Heart right ventricle (tissue), 16 donors: ENCODE measurements at regions of chr19 and their contacts with region 1.

Region 1: DNA sequence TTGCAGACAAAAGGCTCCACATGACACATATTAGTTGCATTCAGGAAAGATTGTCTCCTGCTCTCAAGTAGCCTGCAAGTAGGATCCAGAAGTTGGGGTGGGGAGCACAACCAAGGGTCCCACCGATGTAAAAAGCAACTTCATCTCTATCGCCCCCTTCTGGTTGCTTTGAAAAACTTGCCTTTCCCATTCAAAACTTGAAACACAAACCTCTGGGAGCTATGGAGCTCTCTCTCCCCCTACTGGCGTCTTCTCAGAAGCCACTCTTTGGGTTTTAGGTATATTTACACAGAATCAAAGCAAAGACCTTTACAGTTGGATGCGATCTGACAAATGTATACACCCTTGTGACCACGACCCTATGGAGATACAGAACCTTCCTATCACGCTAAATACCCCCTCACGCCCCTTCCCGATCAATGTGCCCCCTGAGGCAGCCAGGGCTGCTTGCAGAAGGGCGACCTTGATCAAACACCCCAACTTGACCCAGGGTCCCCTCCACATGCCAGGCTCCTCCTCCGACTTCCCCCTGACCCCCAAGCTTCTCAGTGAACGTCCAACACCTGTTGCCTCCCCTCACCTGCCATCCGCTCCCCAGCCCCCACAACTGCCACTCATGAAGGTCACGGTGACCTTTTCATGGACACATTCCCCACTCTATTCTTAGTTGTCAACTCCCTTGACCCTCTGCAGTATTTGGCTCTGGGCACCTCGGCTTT is 10.1 kb downstream of the NOSIP start:
- DNase-seq: peak in 1 of 2 donors; percentile 74
- ATAC-seq: peak; percentile 58 to 84 (median 73)
- H3K4me3 ChIP-seq: no peak overlapping the region
- H3K27ac ChIP-seq: peak overlapping the region in 9 of 10 donors; percentile 19 to 83 (median 79)
- H3K4me1 ChIP-seq: peaks cover 8 to 48% (median 31%) of the 10 kb centered on the region in 9 donors
- H3K27me3 ChIP-seq: no peaks in the 10 kb centered on the region
- CTCF ChIP-seq: peak; percentile 95 to 99 (median 98)

Region 2: GRCh38 chr19:49497047-49497788 is 73.1 kb before region 1 on chr19:
- intact Hi-C with region 1: loop called in 5 of 10 experiments (anchors 2 to 5 kb)
- DNase-seq: peak; percentile 32 to 56
- ATAC-seq: no peak
- H3K4me3 ChIP-seq: peak overlapping the region; percentile 63 to 97 (median 82)
- H3K27ac ChIP-seq: peak overlapping the region; percentile 87 to 99 (median 92)
- H3K4me1 ChIP-seq: peaks cover 11 to 61% (median 49%) of the 10 kb centered on the region in 9 donors
- H3K27me3 ChIP-seq: no peaks in the 10 kb centered on the region
- CTCF ChIP-seq: no peak

Region 3: DNA sequence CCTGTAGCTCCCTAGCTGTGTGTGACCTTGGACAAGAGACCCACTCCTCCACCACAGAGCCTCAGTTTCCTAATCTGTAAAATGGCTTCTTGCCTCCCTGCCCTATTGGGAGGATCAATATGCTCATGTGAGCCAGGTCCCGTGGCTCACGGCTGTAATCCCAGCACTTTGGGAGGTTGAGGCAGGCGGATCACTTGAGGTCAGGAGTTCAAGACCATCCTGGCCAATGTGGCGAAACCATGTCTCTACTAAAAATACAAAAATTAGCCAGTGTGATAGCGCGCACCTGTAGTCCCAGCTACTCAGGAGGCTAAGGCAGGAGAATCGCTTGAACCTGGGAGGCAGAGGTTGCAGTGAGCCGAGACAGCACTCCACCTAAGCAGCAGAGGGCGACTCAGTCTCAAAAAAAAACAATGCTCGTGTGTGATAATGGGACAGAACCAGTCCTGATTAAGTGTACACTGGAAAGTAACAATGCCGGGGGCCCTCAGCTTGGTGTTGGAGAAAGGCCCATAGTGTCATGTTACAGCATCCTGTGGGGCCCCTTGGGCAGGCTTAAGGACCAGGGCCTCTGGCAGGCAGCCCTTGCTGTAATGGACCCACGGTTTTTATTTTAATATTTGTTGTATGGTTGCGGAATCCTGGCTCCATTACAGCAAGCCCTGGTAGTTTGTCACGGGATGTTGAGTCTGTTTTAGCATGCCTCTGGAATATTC is 67.3 kb before region 1 on chr19:
- intact Hi-C with region 1: loop called in 5 of 10 experiments (anchors 2 to 5 kb)
- DNase-seq: peak in 1 of 2 donors; percentile 59
- ATAC-seq: peak; percentile 16 to 64 (median 54)
- H3K4me3 ChIP-seq: no peak overlapping the region
- H3K27ac ChIP-seq: peak overlapping the region in 3 of 10 donors; percentile 17 to 46 (median 25)
- H3K4me1 ChIP-seq: peaks cover 6 to 54% (median 35%) of the 10 kb centered on the region in 9 donors
- H3K27me3 ChIP-seq: no peaks in the 10 kb centered on the region
- CTCF ChIP-seq: peak; percentile 34 to 78 (median 67)

Region 4: DNA sequence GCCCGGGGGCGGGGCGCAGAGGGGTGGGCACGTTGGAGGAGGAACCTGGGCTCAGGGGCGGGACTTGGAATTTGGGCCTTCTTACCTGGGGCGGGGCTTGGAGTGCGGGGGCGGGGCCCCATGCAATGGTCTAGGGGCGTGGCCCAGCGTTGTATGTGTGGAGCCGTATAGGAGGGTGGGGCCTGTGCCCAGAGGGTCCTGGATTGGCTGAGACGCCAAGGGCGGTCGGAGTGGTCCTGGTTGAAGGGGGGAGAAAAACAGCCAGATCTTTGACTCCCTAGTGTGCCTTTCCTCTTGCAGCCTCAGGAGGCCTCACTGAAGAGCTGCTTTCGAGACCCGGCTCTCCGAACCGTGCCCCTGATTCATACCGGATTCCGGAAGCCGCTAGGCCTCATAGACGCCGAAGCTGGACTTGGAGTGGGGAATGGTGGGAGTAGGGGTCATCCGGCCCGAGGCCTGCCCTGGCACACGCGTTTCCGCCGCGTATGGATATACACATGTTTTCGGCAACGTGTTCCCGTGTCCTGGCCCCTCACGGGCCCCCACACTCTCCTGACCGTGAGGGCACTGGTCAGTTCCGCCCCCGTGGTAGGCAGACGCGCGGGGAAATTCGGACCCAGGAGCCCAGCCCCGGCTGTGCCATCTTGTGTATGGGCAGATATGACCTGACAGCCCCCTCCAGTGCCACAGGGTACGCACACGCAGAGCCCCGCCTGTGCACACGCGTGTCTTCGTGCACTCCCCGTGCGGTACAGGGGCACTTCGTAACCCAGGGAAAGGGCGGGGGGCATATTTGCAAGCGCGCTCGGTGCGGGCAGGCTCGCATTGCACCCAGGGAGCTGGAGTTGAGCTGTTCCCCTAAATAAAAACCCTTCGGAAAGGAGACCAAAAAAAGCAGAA is 20.0 kb after region 1 on chr19:
- intact Hi-C with region 1: no loop called
- DNase-seq: peak; percentile 94 to 95
- ATAC-seq: peak; percentile 79 to 91 (median 88)
- H3K4me3 ChIP-seq: peak overlapping the region; percentile 65 to 89 (median 81)
- H3K27ac ChIP-seq: peak overlapping the region; percentile 76 to 98 (median 92)
- H3K4me1 ChIP-seq: peaks cover 6 to 37% (median 22%) of the 10 kb centered on the region in 9 donors
- H3K27me3 ChIP-seq: no peaks in the 10 kb centered on the region
- CTCF ChIP-seq: peak in 3 of 9 donors; percentile 10 to 25 (median 25)

Region 5: DNA sequence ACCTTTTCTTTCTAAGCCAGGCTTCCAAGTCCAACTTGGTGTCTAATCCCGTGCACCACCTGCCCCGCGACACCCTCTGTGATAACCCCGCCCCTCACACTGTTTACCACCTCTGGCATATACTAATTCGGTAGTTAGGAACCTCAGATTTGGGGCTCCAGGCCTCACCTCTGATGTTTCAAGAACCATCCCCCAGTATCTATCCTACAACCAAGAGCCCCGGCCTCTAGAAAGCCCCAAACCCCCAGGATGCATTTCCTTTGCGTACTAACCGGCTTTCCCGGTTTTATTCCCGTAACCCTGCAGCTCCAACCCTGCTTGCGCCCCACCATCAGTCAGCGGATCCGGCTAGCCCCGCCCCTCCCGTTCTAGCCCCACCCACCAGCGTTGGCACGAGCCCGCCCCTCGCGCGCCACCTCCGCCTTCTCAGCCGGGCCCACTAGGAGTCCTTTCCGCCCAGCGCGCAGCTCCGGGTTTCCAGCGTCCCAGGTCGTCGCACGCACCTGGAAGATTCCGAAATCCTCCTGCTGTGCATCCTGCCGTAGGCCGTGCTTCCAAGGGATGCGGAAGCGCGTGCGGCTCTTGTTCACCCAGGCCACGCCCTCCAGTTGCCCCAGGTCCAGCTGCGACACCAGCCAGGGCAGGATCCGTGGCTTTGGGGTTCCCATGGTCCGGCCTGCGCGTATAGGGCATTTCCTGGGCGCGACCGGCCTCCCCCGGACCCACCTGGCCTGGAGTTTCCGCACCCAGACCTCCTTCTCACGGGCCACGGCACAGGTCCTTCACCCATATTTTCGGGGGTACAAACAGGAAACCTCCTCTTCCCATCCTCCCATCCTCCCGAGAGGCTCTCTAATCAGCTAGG is 94.1 kb after region 1 on chr19:
- intact Hi-C with region 1: no loop called
- DNase-seq: peak; percentile 88 to 91
- ATAC-seq: peak; percentile 78 to 88 (median 84)
- H3K4me3 ChIP-seq: peak overlapping the region; percentile 50 to 94 (median 78)
- H3K27ac ChIP-seq: peak overlapping the region; percentile 11 to 92 (median 89)
- H3K4me1 ChIP-seq: peaks cover 10 to 31% (median 19%) of the 10 kb centered on the region in 9 donors
- H3K27me3 ChIP-seq: no peaks in the 10 kb centered on the region
- CTCF ChIP-seq: peak in 4 of 9 donors; percentile 19 to 37 (median 34)

Region 6: DNA sequence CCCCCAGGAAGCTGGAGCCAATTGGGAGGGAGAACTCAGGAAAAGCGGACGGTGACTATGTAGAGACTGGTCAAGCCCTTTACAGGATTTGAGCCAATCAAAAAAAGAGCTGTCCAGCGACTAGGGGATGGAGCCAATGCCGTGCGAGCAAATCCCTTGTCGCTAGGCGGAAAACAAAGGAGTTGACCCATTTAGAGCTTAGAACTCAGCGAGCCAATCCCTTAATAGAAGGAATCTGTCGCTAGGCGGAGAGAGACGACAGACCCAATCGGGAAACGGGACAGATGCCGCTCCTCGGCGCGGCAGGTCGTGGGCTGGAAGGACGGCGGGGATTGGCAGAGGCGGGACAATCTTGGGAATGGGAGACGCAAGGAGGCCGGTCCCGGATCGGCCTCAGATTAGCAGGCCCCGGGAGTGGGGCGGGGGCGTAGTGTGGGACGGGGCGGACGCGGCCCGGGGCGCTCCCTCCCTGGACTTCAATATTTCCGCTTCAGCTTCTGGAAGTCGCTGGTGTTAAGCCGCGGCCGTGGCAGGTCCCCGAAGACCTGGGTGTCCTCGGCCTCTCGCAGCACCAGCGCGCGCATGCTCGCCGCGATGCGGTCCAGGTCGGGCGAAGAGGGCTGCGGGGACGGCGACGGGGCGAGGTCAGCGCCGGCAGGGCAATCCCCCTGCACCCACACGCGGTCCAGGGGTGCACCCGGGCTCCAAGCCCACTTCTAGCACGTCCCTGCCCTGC is 299.3 kb after region 1 on chr19:
- intact Hi-C with region 1: no loop called
- DNase-seq: peak; percentile 96 to 98
- ATAC-seq: peak; percentile 77 to 91 (median 84)
- H3K4me3 ChIP-seq: peak overlapping the region; percentile 41 to 73 (median 60)
- H3K27ac ChIP-seq: peak overlapping the region; percentile 88 to 98 (median 94)
- H3K4me1 ChIP-seq: peaks cover 20 to 60% (median 49%) of the 10 kb centered on the region in 9 donors
- H3K27me3 ChIP-seq: no peaks in the 10 kb centered on the region
- CTCF ChIP-seq: peak in 3 of 9 donors; percentile 14 to 24 (median 16)